Activated T-helper 1 cell treated with anti-CD3 and anti-CD28 coated beads, Interleukin-12 subunit alpha, Interleukin-12 subunit beta, Interleukin-2, Interleukin-4 antibody, amounts not matched to agents 30 ng/mL and 10 ng/mL and 1 ng/mL, durations not matched to agents 14 hours and 24 hours and 36 hours (primary cell): ENCODE measurements at regions of chr17 and their contacts with region 1.

Region 1: GRCh38 chr17:45584092-45585036 is 93.8 kb upstream of the PLEKHM1 start:
- DNase-seq: peak; percentile 73
- H3K4me3 Mint-ChIP-seq: peak overlapping the region; percentile 89
- H3K27ac Mint-ChIP-seq: peak overlapping the region; percentile 94
- H3K4me1 Mint-ChIP-seq: peaks cover 44% of the 10 kb centered on the region
- H3K27me3 Mint-ChIP-seq: peaks cover 2% of the 10 kb centered on the region

Region 2: DNA sequence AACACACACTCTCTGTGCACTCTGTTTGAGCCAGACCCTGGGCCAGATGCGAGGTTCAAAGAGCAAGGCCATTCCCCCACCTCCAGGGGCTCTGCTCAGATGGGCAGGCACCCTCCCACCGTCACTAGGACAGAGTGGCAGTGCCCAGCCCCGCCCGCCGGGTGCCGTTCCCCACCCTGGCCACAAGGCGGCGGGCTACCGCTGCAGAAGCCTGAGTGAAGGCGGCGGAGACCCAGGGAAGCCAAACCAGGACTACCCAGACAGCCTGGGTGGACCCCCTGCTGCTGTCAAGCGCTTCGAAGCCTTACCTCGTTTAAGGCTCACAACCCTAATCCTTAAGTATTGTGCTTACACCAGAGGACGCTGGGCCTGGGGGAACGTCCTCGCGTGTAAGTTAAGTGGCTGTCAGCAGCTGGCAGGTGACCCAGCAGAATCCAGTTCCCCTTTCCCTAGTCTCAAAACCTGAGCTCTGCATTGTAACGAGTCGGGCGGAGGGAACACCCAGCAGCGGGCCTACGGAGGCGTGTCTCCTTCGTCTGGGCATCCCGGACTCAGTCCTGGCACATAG is 156.2 kb before region 1 on chr17:
- intact Hi-C with region 1: loop called (anchors 2 kb)
- DNase-seq: peak; percentile 78
- H3K4me3 Mint-ChIP-seq: peak overlapping the region; percentile 51
- H3K27ac Mint-ChIP-seq: peak overlapping the region; percentile 58
- H3K4me1 Mint-ChIP-seq: peaks cover 29% of the 10 kb centered on the region
- H3K27me3 Mint-ChIP-seq: no peaks in the 10 kb centered on the region

Region 3: GRCh38 chr17:46108550-46109110 is 524.3 kb after region 1 on chr17:
- intact Hi-C with region 1: loop called (anchors 10 kb)
- DNase-seq: no peak
- H3K4me3 Mint-ChIP-seq: no peak overlapping the region
- H3K27ac Mint-ChIP-seq: no peak overlapping the region
- H3K4me1 Mint-ChIP-seq: peaks cover 50% of the 10 kb centered on the region
- H3K27me3 Mint-ChIP-seq: no peaks in the 10 kb centered on the region

Region 4: GRCh38 chr17:46266656-46267544 is 682.5 kb after region 1 on chr17:
- intact Hi-C with region 1: loop called (anchors 10 kb)
- DNase-seq: peak; percentile 86
- H3K4me3 Mint-ChIP-seq: peak overlapping the region; percentile 92
- H3K27ac Mint-ChIP-seq: peak overlapping the region; percentile 88
- H3K4me1 Mint-ChIP-seq: peaks cover 39% of the 10 kb centered on the region
- H3K27me3 Mint-ChIP-seq: peaks cover 50% of the 10 kb centered on the region